CD4-positive, alpha-beta T cell (primary cell): ENCODE measurements at regions of chr12 and their contacts with region 1.

Region 1: GRCh38 chr12:79834712-79835376 is 100.1 kb downstream of the PPP1R12A start:
- DNase-seq: no peak
- ATAC-seq: no peak
- H3K4me3 ChIP-seq: no peak overlapping the region
- H3K4me3 Mint-ChIP-seq: no peak overlapping the region
- H3K27ac ChIP-seq: no peak overlapping the region
- H3K27ac Mint-ChIP-seq: no peak overlapping the region
- H3K4me1 ChIP-seq: peaks cover 6% of the 10 kb centered on the region
- H3K4me1 Mint-ChIP-seq: peaks cover 72% of the 10 kb centered on the region
- H3K27me3 ChIP-seq: no peaks in the 10 kb centered on the region
- H3K27me3 Mint-ChIP-seq: no peaks in the 10 kb centered on the region
- CTCF ChIP-seq: no peak

Region 2: DNA sequence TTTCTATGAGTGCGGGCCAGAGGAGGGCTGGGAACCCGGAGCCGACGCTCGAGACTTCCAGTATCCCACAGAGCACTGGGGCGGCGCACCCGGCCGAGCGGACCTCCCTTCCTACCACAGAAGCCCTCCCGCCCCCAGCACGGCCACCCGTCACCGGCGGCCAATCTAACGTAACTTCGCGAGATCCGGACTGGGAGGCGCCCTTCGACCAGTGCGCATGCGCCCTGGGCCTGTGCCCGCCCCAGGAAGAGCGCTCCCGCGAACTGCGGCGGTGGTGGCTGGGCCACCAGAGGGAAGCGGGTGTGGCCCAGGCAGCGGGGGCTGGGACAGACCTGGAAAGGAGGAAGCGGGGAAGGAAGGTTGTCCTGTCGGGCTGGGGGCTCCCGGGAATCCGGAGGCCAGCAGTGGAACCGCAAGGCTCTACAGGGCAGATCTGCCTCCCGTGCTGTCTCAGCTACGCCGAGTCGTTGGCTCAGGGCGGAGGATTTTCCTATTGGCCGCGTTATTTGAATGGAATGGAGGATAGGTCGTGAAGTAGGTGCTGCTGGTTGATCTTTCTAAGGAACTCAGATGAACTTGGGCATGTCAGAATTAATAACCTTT is 100.3 kb after region 1 on chr12 and contains the start of gene PPP1R12A:
- CTCF ChIA-PET with region 1: no interaction called
- POLR2A ChIA-PET with region 1: no interaction called
- intact Hi-C with region 1: loop called in 1 of 2 experiments (anchors 10 kb)
- DNase-seq: peak; percentile 87 to 98 (median 92)
- ATAC-seq: peak; percentile 85
- H3K4me3 ChIP-seq: peak within 1 kb of the TSS; percentile 69
- H3K4me3 Mint-ChIP-seq: peak within 1 kb of the TSS; percentile 87
- H3K27ac ChIP-seq: peak within 1 kb of the TSS; percentile 83 to 85
- H3K27ac Mint-ChIP-seq: peak within 1 kb of the TSS; percentile 96
- H3K4me1 ChIP-seq: peaks cover 6% of the 10 kb centered on the region
- H3K4me1 Mint-ChIP-seq: peaks cover 48% of the 10 kb centered on the region
- H3K27me3 ChIP-seq: no peaks in the 10 kb centered on the region
- H3K27me3 Mint-ChIP-seq: no peaks in the 10 kb centered on the region
- CTCF ChIP-seq: peak; percentile 15
- total RNA-seq, gene PPP1R12A: 65.6 to 76.4 TPM